ENCODE measurements at regions of chr1 and their contacts with region 1.

Region 1: GRCh38 chr1:10734927-10735584 is 61.4 kb downstream of the CASZ1 start:
- DNase-seq: no peak
- H3K4me3 ChIP-seq: peak overlapping the region in 1 of 4 experiments; percentile 1; a peak in 3 of 8 replicates
- H3K27ac ChIP-seq: no peak overlapping the region
- H3K4me1 ChIP-seq: peaks cover 5 to 31% (median 20%) of the 10 kb centered on the region in 4 experiments
- H3K27me3 ChIP-seq: no peaks in the 10 kb centered on the region
- CTCF ChIP-seq: no peak
- EP300 ChIP-seq: no peak
- POLR2A ChIP-seq: no peak
- RAD21 ChIP-seq: no peak; a peak in 1 of 4 replicates

Region 2: GRCh38 chr1:10745886-10746455 is 10.9 kb after region 1 on chr1:
- CTCF ChIA-PET with region 1: interaction called, 32 read pairs
- POLR2A ChIA-PET with region 1: interaction called, 3 read pairs
- DNase-seq: no peak
- H3K4me3 ChIP-seq: no peak overlapping the region
- H3K27ac ChIP-seq: no peak overlapping the region
- H3K4me1 ChIP-seq: peaks cover 0 to 5% (median 0%) of the 10 kb centered on the region in 4 experiments; a peak in 6 of 7 replicates
- H3K27me3 ChIP-seq: no peaks in the 10 kb centered on the region
- CTCF ChIP-seq: no peak
- EP300 ChIP-seq: no peak
- POLR2A ChIP-seq: no peak
- RAD21 ChIP-seq: no peak

Region 3: GRCh38 chr1:10753299-10753698 is 18.2 kb after region 1 on chr1:
- CTCF ChIA-PET with region 1: interaction called, 32 read pairs
- POLR2A ChIA-PET with region 1: no interaction called
- DNase-seq: peak in 1 of 2 experiments; percentile 65
- H3K4me3 ChIP-seq: no peak overlapping the region
- H3K27ac ChIP-seq: no peak overlapping the region
- H3K4me1 ChIP-seq: peaks cover 0 to 7% (median 4%) of the 10 kb centered on the region in 4 experiments; a peak in 5 of 7 replicates
- H3K27me3 ChIP-seq: no peaks in the 10 kb centered on the region
- CTCF ChIP-seq: peak; percentile 44 to 61 (median 61); a peak in 3 of 4 replicates
- EP300 ChIP-seq: no peak
- POLR2A ChIP-seq: no peak
- RAD21 ChIP-seq: peak; percentile 44 to 59